Adrenal gland (tissue), 19 donors: ENCODE measurements at regions of chr11 and their contacts with region 1.

Region 1: GRCh38 chr11:110092515-110093404 is at the start of gene ZC3H12C:
- DNase-seq: peak; percentile 84 to 93 (median 90)
- H3K4me3 ChIP-seq: peak within 1 kb of the TSS; percentile 34 to 93 (median 62)
- H3K27ac ChIP-seq: peak within 1 kb of the TSS; percentile 84 to 99 (median 95)
- H3K4me1 ChIP-seq: peaks cover 11 to 34% of the 10 kb centered on the region in 2 donors
- H3K27me3 ChIP-seq: no peaks in the 10 kb centered on the region
- CTCF ChIP-seq: peak in 5 of 6 experiments; percentile 13 to 89 (median 45)
- POLR2A ChIP-seq: peak; percentile 73 to 74
- total RNA-seq, gene ZC3H12C: 10.0 to 28.9 (median 20.3) TPM

Region 2: GRCh38 chr11:109954534-109954933 is 138.2 kb before region 1 on chr11:
- intact Hi-C with region 1: loop called (anchors 5 to 10 kb)
- DNase-seq: no peak
- H3K4me3 ChIP-seq: no peak overlapping the region
- H3K27ac ChIP-seq: no peak overlapping the region
- H3K4me1 ChIP-seq: no peaks in the 10 kb centered on the region
- H3K27me3 ChIP-seq: no peaks in the 10 kb centered on the region
- CTCF ChIP-seq: no peak
- POLR2A ChIP-seq: no peak

Region 3: DNA sequence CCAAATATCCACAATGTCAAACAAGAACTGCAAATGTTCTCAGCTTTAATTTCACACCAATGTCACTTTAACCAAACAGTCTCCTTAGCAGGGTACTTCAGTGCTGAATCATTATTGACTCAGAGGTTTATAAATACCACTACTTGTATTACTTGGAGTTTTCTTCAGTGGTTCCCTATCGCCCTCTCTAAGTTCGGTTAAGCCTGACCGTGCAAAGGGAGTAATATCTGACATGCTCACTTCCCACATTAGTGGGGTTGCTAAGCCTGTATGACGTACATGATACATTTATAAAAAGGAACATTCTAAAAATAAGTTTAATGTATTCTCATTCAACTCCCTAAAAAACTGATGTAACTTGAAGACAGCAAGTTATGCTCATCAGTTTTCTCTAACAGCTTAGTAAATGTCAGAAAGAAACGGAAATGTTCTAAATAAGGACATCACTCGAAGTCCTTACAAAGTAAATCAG is 92.7 kb before region 1 on chr11:
- intact Hi-C with region 1: no loop called
- DNase-seq: peak in 1 of 7 donors; percentile 5
- H3K4me3 ChIP-seq: no peak overlapping the region
- H3K27ac ChIP-seq: no peak overlapping the region
- H3K4me1 ChIP-seq: peaks cover 0 to 8% of the 10 kb centered on the region in 2 donors
- H3K27me3 ChIP-seq: no peaks in the 10 kb centered on the region
- CTCF ChIP-seq: no peak
- POLR2A ChIP-seq: no peak